ENCODE measurements at regions of chr1 and their contacts with region 1.

Region 1: DNA sequence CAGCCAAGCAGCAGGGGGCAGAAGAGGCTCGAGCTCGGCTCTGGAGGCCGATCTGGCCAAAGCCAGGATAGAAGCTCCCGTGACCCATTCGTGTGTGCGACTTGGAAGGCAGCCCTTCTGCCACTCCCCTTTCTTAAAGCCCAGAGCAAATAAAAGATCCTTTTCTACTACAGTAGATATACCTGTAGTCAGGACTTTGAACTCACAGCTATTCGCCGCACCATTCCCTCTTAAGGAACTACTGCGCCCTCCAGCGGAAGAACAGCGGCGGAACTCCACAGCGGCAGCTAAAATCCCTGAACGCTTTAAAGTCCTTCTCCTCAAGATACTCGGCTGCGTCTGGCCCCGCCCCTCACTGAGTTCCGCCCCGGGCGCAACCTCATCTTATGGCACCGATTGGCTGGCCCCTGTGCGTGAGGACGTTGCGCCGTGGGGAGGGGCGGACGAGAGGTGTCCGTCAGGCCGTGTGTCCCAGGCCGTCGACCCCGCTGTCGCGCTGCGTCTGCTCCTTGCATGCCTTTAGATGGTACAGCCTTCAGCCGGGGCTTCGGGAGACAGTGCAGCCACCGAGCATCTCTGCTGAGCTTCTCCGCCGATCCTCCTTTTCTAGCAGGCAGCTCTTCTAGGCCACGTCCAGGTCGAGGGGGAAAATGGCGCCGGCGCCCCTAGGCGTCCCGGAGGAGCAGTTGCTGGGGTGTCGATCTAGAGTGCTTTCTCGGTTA is at the start of gene LRIG2:
- DNase-seq: peak; percentile 90
- H3K4me3 ChIP-seq: peak within 1 kb of the TSS; percentile 69
- H3K27me3 ChIP-seq: no peaks in the 10 kb centered on the region
- CTCF ChIP-seq: peak; percentile 92
- polyA plus RNA-seq, gene LRIG2: 5.3 and 7.1 TPM in 2 replicates

Region 2: GRCh38 chr1:112809253-112809684 is 263.6 kb before region 1 on chr1:
- CTCF ChIA-PET with region 1: interaction called, 21 read pairs
- POLR2A ChIA-PET with region 1: no interaction called
- DNase-seq: no peak
- H3K4me3 ChIP-seq: no peak overlapping the region
- H3K27me3 ChIP-seq: 0 out of 2 replicates have a peak, but pooled peaks cover 4% of the 10 kb centered on the region
- CTCF ChIP-seq: peak; percentile 98

Region 3: DNA sequence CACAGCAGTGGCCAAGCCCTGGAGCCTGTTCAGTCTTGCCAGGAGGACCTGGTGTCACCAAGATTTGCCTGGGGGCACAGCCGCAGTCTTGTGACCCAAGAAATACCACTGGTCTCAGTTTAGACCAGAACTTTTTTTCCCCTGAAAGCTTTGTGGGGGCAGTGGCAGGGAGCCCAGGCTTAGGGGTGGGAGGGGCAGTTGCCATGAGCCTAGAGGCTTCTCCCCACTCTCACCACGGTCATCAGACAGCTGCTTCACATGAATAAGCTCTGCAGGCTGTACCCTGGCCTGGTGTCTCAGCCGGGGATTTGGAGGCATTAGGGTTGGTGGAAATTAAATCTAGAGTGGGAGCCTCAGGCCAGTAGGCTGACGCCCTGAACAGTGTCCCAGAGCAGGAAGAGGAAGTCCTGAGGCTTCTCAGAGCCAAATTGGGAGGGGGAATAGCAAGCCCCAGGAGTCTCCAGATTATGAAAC is 190.6 kb before region 1 on chr1:
- CTCF ChIA-PET with region 1: interaction called, 45 read pairs
- POLR2A ChIA-PET with region 1: no interaction called
- DNase-seq: no peak
- H3K4me3 ChIP-seq: no peak overlapping the region
- H3K27me3 ChIP-seq: no peaks in the 10 kb centered on the region
- CTCF ChIP-seq: no peak

Region 4: GRCh38 chr1:112998592-112999235 is 74.2 kb before region 1 on chr1:
- CTCF ChIA-PET with region 1: no interaction called
- POLR2A ChIA-PET with region 1: no interaction called
- DNase-seq: no peak
- H3K4me3 ChIP-seq: no peak overlapping the region
- H3K27me3 ChIP-seq: no peaks in the 10 kb centered on the region
- CTCF ChIP-seq: no peak

Region 5: GRCh38 chr1:113057006-113057405 is 15.9 kb before region 1 on chr1:
- CTCF ChIA-PET with region 1: interaction called, 69 read pairs
- POLR2A ChIA-PET with region 1: interaction called, 3 read pairs
- DNase-seq: no peak
- H3K4me3 ChIP-seq: no peak overlapping the region
- H3K27me3 ChIP-seq: no peaks in the 10 kb centered on the region
- CTCF ChIP-seq: no peak

Region 6: GRCh38 chr1:113095790-113096455 is 23.0 kb after region 1 on chr1:
- CTCF ChIA-PET with region 1: interaction called, 26 read pairs
- POLR2A ChIA-PET with region 1: no interaction called
- DNase-seq: no peak
- H3K4me3 ChIP-seq: no peak overlapping the region
- H3K27me3 ChIP-seq: no peaks in the 10 kb centered on the region
- CTCF ChIP-seq: no peak

Region 7: GRCh38 chr1:113106910-113107309 is 34.0 kb after region 1 on chr1:
- CTCF ChIA-PET with region 1: no interaction called
- POLR2A ChIA-PET with region 1: no interaction called
- DNase-seq: no peak
- H3K4me3 ChIP-seq: no peak overlapping the region
- H3K27me3 ChIP-seq: no peaks in the 10 kb centered on the region
- CTCF ChIP-seq: no peak

Region 8: GRCh38 chr1:113405573-113405972 is 332.7 kb after region 1 on chr1:
- CTCF ChIA-PET with region 1: no interaction called
- POLR2A ChIA-PET with region 1: no interaction called
- DNase-seq: no peak
- H3K4me3 ChIP-seq: no peak overlapping the region
- H3K27me3 ChIP-seq: no peaks in the 10 kb centered on the region
- CTCF ChIP-seq: no peak

Measured in BJ (cell line).